Sigmoid colon (tissue), 7 donors: ENCODE measurements at regions of chr1 and their contacts with region 1.

Region 1: GRCh38 chr1:51192213-51192843 is 43.7 kb upstream of the RNF11 start:
- DNase-seq: peak; percentile 80
- H3K4me3 ChIP-seq: no peak overlapping the region
- H3K27ac ChIP-seq: no peak overlapping the region
- H3K4me1 ChIP-seq: no peaks in the 10 kb centered on the region
- H3K27me3 ChIP-seq: no peaks in the 10 kb centered on the region
- CTCF ChIP-seq: peak; percentile 45 to 81 (median 61)
- EP300 ChIP-seq: no peak
- POLR2A ChIP-seq: no peak

Region 2: GRCh38 chr1:50774759-50775351 is 417.5 kb before region 1 on chr1:
- intact Hi-C with region 1: loop called (anchors 2 kb)
- DNase-seq: no peak
- H3K4me3 ChIP-seq: no peak overlapping the region
- H3K27ac ChIP-seq: no peak overlapping the region
- H3K4me1 ChIP-seq: no peaks in the 10 kb centered on the region
- H3K27me3 ChIP-seq: no peaks in the 10 kb centered on the region
- CTCF ChIP-seq: peak; percentile 22 to 74 (median 63)
- EP300 ChIP-seq: no peak
- POLR2A ChIP-seq: no peak

Region 3: DNA sequence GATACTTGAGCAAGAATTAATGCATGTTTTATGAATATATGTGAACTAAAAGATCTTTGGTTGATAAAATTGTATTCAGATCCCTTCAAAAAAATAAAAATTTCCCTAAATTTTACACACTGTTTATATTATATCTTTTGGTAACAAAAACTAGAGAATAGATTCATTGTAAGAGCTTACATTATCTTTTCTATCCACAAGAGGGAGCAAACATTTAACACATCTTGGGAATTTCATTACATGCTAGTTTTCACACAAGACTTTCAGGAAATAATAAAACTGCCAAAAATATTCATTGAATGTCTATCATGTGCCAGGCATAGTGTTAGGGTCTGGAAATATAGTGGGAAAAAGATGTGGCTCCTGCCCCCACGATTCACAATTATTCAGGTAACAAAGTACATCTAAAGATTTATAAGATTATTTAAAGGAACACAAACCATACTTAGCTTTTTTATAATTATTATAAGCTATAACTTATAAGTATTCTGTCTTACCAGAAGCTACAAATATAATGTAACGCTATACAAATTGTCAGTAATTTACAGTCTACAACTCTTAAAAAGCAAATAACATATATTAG is 262.9 kb before region 1 on chr1:
- intact Hi-C with region 1: loop called (anchors 5 kb)
- DNase-seq: no peak
- H3K4me3 ChIP-seq: no peak overlapping the region
- H3K27ac ChIP-seq: no peak overlapping the region
- H3K4me1 ChIP-seq: peaks cover 0 to 9% (median 0%) of the 10 kb centered on the region in 4 donors
- H3K27me3 ChIP-seq: no peaks in the 10 kb centered on the region
- CTCF ChIP-seq: peak; percentile 7 to 56 (median 43)
- EP300 ChIP-seq: no peak
- POLR2A ChIP-seq: no peak

Region 4: GRCh38 chr1:50959913-50960844 is 232.1 kb before region 1 on chr1 and contains the start of gene FAF1:
- intact Hi-C with region 1: loop called (anchors 10 kb)
- DNase-seq: peak; percentile 98
- H3K4me3 ChIP-seq: peak within 1 kb of the TSS; percentile 69 to 80 (median 72)
- H3K27ac ChIP-seq: peak within 1 kb of the TSS; percentile 83 to 91 (median 88)
- H3K4me1 ChIP-seq: peaks cover 0 to 20% (median 17%) of the 10 kb centered on the region in 4 donors
- H3K27me3 ChIP-seq: no peaks in the 10 kb centered on the region
- CTCF ChIP-seq: peak in 3 of 4 experiments; percentile 23 to 40 (median 28)
- EP300 ChIP-seq: peak in 1 of 4 donors; percentile 67
- POLR2A ChIP-seq: peak; percentile 93 to 94
- total RNA-seq, gene FAF1: 53.9 to 59.3 (median 55.6) TPM

Region 5: DNA sequence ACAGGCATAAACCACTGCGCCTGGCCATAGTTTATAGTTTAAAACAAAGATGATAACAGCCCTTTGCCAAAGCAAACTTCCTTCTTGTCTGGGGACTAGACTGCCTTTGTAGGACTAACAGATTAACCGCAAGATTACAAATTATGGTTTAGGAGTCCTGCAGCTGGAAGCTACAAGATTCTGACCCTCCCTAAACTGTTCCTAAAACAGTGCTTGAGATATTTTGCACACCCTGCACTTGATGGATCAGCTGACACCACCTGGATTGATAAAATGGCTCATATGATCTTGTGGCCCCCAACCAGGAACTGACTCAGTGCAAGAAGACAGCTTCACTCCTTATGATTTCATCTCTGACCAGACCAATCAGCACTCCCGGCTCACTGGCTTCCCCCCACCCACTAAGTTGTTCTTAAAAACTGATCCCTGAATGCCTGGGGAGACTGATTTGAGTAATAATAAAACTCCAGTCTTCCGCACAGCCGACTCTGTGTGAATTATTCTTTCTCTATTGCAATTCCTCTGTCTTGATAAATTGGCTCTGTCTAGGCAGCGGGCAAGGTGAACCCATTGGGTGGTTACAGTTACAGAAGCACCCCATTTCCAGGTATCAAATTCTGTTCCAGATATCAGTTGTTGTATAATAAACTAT is 29.9 kb after region 1 on chr1:
- intact Hi-C with region 1: no loop called
- DNase-seq: no peak
- H3K4me3 ChIP-seq: no peak overlapping the region
- H3K27ac ChIP-seq: no peak overlapping the region
- H3K4me1 ChIP-seq: no peaks in the 10 kb centered on the region
- H3K27me3 ChIP-seq: no peaks in the 10 kb centered on the region
- CTCF ChIP-seq: no peak
- EP300 ChIP-seq: no peak
- POLR2A ChIP-seq: no peak

Region 6: GRCh38 chr1:51235673-51236530 is 43.6 kb after region 1 on chr1 and contains the start of gene RNF11:
- intact Hi-C with region 1: loop called (anchors 5 kb)
- DNase-seq: peak; percentile 97
- H3K4me3 ChIP-seq: peak within 1 kb of the TSS; percentile 76 to 100 (median 88)
- H3K27ac ChIP-seq: peak within 1 kb of the TSS; percentile 93 to 98 (median 96)
- H3K4me1 ChIP-seq: peaks cover 0 to 43% (median 40%) of the 10 kb centered on the region in 4 donors
- H3K27me3 ChIP-seq: no peaks in the 10 kb centered on the region
- CTCF ChIP-seq: no peak
- EP300 ChIP-seq: peak in 2 of 4 donors; percentile 7 to 47
- POLR2A ChIP-seq: peak; percentile 72 to 75
- total RNA-seq, gene RNF11: 85.8 to 116 (median 101) TPM

Region 7: DNA sequence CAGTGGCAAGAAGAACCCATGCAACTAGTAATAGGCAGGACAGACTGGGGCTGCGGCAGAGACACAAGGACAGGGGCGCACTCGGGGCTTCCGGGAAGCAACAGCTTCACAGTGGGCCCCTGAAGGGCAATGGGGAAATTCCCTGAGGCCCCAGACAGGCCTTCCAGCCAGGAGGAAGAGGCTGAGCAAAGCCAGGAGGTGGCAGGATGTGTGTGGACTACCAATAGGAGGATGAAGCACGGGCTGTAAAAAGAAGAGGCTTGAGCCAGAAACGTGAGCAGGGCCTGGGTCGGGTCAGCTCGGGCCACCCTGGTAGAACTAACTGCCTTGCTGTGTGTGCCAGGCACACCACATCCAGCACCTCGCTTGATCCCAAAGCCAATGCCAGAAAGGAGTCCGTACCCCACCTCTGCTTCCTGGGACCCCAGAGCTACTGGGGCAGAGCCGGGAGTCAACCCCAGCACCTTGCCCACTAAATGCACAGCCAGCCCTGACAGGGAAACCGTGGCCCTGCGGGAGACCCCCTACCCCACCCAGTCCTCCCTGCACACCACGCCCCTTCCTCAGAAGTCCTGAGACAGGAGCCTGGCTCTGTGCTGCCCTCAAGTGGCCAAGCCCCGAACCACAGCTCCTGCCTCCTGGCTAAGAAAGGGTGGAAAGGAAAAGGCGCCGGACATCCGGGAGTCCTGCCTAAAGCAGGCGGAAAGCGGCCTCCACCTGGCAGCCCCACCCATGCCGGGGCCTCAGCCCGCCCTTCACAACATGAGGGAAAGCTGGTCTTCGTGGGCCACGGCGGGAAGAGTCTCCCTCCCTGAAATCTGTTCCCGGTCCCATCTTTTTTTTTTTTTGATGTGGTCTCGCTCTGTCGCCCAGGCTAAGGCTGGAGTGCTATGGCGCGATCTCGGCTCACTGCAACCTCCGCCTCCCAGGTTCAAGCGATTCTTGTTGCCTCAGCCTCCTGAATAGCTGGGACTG is 104.3 kb after region 1 on chr1:
- intact Hi-C with region 1: loop called (anchors 5 kb)
- DNase-seq: peak; percentile 87
- H3K4me3 ChIP-seq: peak overlapping the region; percentile 34 to 56 (median 52)
- H3K27ac ChIP-seq: peak overlapping the region in 2 of 4 donors; percentile 7 to 34
- H3K4me1 ChIP-seq: peaks cover 0 to 12% (median 9%) of the 10 kb centered on the region in 4 donors
- H3K27me3 ChIP-seq: peaks cover 0 to 7% (median 0%) of the 10 kb centered on the region in 3 donors
- CTCF ChIP-seq: peak; percentile 70 to 97 (median 92)
- EP300 ChIP-seq: no peak
- POLR2A ChIP-seq: no peak